Left ventricle myocardium superior (tissue), 1 donor: ENCODE measurements at regions of chr6 and their contacts with region 1.

Region 1: DNA sequence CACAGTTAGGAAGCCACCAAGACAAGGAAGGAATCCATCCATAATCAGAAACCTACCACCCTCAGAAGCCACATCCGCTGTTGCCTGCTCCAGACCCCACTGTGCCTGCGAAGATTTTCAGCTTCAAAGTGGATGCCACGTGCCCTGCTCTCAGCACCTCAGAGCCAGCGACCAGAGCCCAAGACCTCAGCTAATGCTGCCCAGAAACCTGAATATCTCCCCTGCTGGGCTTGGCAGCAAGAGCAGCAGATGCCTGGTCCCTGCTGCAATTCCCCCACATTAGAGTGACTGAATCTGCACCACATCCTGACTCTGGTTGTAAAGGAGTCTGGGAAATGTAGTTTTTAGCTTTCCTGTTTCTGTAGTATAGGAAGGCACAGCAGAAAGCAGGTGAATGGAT is 10.7 kb upstream of the ULBP3 start:
- DNase-seq: no peak
- ATAC-seq: no peak

Region 2: DNA sequence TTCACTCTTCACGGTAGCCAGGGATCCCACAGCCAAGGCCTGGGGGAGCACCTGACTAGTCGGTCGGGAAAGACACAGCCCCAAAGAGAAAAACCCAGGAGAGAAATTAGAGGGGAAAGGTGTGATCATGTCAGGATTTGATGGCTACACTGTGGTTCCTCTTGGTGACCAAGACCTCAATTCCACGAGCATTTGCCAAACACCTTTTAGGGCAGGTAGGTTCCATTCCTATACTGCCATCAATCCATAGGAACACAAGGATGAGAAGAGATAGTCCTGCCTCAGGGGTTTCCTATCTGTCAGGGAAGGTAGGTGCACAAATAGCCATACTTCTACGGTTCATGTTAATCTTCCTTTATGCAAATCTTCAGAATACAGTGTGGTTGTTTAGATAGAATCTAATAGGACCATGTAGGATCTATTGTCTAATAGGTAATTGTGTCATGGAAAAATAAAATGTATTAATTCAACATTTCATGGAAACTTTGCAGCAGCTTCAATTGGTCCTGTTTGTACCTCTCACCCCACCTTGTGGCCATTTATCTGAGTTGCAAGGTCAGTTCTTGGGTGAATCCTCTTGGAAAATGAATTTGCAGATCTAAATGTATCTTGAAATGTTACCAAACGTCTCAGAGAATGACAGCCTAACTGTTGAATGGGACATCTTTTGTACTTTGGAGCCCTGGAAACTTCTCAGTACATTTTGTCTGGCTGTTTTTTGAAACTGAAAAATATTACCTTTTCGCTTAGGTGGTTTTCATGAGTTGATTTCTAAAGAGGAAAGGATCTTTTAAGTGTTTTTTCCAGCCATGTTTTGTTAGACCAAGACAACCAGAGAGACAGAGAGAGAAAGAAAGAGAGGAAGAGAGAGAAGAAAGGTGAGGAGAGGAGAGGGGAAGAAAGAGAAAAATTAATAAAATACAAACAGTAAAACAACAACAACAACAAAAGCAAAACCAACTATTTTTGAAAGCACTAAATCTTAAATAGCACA is 255.5 kb after region 1 on chr6:
- intact Hi-C with region 1: loop called (anchors 2 kb)
- DNase-seq: no peak
- ATAC-seq: no peak

Region 3: DNA sequence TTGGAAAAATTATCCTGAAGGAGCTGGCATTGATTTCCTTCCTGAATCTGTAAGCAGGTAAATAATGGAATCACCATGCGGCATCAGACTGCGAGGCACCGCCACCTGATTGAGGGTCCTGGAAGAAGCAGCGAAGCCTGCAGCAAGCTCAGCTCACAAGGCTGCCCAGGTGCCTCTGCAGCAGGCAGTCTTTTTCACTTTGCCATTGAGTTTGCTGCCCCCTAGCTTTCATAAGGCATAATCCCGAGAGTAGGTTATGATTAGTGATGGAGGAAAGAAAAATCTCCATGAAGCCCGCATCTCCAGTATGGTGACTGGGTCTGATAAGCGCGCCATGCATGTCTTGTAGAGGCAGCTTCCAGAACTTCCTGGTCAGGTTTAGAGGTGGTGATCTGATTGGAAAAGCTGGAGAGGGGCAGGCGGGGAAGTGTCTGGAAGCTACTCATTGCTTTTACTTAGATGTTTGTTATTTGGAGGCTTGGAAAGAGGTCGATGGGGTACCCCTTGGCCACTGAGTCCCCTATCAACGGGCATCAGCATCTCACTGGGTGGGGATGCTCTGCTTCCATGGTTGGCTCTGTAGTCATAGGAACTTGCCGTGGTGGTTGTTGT is 315.9 kb after region 1 on chr6:
- intact Hi-C with region 1: loop called (anchors 10 kb)
- DNase-seq: peak; percentile 34
- ATAC-seq: peak; percentile 79